Ascending aorta (tissue), 2 donors: ENCODE measurements at regions of chr10 and their contacts with region 1.

Region 1: GRCh38 chr10:29998142-29998808 is 61.1 kb downstream of the JCAD start:
- DNase-seq: peak in 1 of 2 donors; percentile 81
- H3K4me3 ChIP-seq: no peak overlapping the region
- H3K27ac ChIP-seq: no peak overlapping the region
- H3K4me1 ChIP-seq: peaks cover 20 to 35% of the 10 kb centered on the region in 2 donors
- H3K27me3 ChIP-seq: no peaks in the 10 kb centered on the region
- CTCF ChIP-seq: peak; percentile 94 to 97 (median 96)

Region 2: DNA sequence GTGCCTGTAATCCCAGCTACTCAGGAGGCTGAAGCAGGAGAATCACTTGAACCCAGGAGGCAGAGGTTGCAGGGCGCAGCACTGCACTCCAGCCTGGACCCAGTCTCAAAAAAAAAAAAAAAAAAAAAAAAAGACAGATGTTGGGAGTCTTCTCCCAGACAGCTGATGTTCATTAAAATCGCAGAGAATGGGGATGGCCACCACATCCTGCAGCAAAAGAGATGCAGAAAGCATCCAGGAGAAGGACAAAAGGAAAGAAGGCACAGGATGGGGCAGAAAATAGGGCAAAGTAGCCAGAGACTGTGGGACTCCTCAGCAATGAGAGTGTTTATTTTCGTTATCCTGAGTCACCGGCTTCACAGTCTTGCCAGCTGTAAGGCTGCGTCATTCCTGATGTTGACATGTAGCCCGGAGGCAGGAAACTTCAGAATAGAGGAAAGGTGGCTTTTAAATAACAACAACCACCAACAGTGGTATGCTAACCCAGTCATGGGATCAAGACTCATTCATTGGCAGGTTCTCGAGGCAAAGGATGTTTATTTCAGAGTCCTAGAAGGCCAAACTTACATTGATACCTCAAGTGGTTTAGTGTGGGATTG is 214.0 kb before region 1 on chr10:
- intact Hi-C with region 1: loop called (anchors 10 kb)
- DNase-seq: peak; percentile 63 to 93
- H3K4me3 ChIP-seq: no peak overlapping the region
- H3K27ac ChIP-seq: peak overlapping the region; percentile 85 to 87
- H3K4me1 ChIP-seq: peaks cover 3 to 25% of the 10 kb centered on the region in 2 donors
- H3K27me3 ChIP-seq: no peaks in the 10 kb centered on the region
- CTCF ChIP-seq: no peak

Region 3: GRCh38 chr10:29857843-29858701 is 140.2 kb before region 1 on chr10:
- intact Hi-C with region 1: loop called (anchors 5 kb)
- DNase-seq: peak in 1 of 2 donors; percentile 91
- H3K4me3 ChIP-seq: peak overlapping the region in 1 of 2 donors; percentile 15
- H3K27ac ChIP-seq: peak overlapping the region; percentile 66 to 68
- H3K4me1 ChIP-seq: peaks cover 9 to 16% of the 10 kb centered on the region in 2 donors
- H3K27me3 ChIP-seq: no peaks in the 10 kb centered on the region
- CTCF ChIP-seq: peak; percentile 65 to 84 (median 81)

Region 4: GRCh38 chr10:29895456-29895855 is 102.8 kb before region 1 on chr10:
- intact Hi-C with region 1: loop called (anchors 5 kb)
- DNase-seq: peak; percentile 33 to 93
- H3K4me3 ChIP-seq: peak overlapping the region; percentile 17 to 19
- H3K27ac ChIP-seq: peak overlapping the region; percentile 87 to 89
- H3K4me1 ChIP-seq: peaks cover 0 to 24% of the 10 kb centered on the region in 2 donors
- H3K27me3 ChIP-seq: no peaks in the 10 kb centered on the region
- CTCF ChIP-seq: no peak

Region 5: DNA sequence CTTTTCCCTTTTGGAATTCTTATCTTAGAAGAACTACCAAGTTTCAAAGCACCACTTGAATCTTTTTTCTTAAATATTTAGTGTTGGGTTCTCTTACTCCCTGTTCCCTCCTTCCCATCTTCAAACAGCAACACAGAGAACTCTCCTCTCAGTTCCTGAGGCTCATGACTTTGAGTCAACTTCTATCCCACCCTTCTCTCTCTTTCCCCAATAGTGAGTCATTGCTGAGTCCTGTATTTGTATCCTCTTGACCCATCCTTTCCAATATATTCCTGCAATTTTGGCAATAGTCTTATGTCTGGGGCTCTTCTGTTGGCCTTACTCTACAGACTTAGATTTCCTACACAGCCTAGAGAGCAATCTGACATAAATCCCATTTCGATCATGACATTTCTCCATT is 81.9 kb after region 1 on chr10:
- intact Hi-C with region 1: no loop called
- DNase-seq: no peak
- H3K4me3 ChIP-seq: no peak overlapping the region
- H3K27ac ChIP-seq: no peak overlapping the region
- H3K4me1 ChIP-seq: no peaks in the 10 kb centered on the region
- H3K27me3 ChIP-seq: no peaks in the 10 kb centered on the region
- CTCF ChIP-seq: no peak

Region 6: DNA sequence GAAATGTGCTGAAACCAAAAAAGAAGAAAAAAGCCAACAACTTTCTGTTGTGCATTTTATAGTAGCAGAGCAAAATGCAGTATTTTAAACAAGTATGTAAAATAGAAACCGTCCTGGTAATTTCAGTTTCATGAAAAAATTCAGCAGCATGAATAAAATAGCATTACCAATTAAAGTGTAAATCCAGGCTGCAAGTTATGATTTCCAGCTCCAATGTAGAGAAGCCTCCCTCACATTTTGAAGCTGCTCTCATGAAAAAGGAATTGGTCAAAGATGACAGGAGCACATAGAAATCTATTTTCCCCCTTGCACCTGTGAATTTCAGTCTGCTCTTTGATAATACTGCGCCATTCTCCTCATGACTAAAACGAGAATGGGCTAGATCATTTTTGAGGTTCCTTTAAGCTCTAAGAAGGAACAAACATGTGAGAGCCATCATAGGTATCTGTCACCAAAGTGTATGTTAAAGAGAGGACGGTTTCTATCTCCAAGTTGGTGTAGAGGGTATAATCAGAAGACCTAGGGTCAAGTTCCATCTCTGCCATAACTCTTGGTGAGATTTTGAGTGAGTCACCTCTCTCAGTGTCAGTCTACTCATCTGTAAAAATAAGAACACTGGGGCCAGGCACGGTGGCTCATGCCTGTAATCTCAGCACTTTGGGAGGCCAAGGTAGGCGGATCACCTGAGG is 243.3 kb after region 1 on chr10:
- intact Hi-C with region 1: loop called (anchors 1 kb)
- DNase-seq: no peak
- H3K4me3 ChIP-seq: no peak overlapping the region
- H3K27ac ChIP-seq: no peak overlapping the region
- H3K4me1 ChIP-seq: no peaks in the 10 kb centered on the region
- H3K27me3 ChIP-seq: no peaks in the 10 kb centered on the region
- CTCF ChIP-seq: no peak

Region 7: DNA sequence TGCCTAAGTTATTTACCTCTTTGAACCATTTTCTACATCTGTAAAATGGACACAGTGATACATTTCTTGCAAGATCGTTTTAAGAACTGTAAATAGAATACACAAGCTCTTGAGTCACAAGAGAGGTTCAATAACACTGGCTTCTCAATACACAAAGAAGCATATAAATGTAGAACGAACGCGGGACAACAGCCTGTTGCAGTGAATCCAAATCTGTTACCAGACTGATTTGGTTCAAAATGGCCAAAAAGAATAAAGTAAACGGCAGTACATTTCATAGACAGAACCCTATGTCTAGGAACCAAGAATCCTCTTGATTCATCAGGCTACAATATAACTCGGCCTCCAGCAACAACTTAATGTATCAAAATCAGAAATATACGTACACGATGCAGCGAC is 350.1 kb after region 1 on chr10:
- intact Hi-C with region 1: no loop called
- DNase-seq: peak in 1 of 2 donors; percentile 21
- H3K4me3 ChIP-seq: peak overlapping the region; percentile 71 to 73
- H3K27ac ChIP-seq: peak overlapping the region; percentile 64 to 83
- H3K4me1 ChIP-seq: peaks cover 7 to 12% of the 10 kb centered on the region in 2 donors
- H3K27me3 ChIP-seq: no peaks in the 10 kb centered on the region
- CTCF ChIP-seq: no peak